Mammary epithelial cell (primary cell): ENCODE measurements at regions of chr6 and their contacts with region 1.

Region 1: DNA sequence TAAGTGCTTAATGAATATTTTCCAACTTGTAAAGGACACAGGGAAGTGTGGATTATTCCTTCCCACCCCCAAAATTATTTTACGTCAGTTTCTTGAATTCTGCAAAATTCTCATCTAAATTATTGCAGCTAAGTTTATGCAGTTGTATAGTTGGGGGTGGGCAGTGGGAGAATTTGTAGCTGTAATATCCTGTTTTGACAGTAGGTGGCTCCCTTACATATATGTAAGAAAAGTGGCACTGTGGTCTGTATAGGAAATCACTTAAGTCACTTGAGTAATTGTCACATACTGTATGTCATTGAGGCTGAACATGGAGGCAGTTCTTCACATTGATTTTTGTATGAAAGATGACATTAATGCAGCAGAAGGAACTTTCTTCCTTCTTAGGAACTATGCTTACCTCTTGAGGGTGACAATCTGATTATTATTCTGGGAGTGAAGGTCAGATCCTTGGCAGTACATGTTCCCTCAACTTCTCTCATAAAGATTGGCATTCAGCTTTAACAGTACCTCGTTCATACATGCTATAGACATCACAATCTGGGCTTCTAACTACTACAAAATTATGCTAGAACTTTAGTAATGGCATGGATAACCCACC is 14.7 kb upstream of the CFAP206 start:
- DNase-seq: peak; percentile 25
- H3K4me3 ChIP-seq: no peak overlapping the region
- H3K27ac ChIP-seq: no peak overlapping the region
- H3K4me1 ChIP-seq: no peaks in the 10 kb centered on the region
- H3K27me3 ChIP-seq: no peaks in the 10 kb centered on the region
- CTCF ChIP-seq: peak; percentile 66 to 69

Region 2: DNA sequence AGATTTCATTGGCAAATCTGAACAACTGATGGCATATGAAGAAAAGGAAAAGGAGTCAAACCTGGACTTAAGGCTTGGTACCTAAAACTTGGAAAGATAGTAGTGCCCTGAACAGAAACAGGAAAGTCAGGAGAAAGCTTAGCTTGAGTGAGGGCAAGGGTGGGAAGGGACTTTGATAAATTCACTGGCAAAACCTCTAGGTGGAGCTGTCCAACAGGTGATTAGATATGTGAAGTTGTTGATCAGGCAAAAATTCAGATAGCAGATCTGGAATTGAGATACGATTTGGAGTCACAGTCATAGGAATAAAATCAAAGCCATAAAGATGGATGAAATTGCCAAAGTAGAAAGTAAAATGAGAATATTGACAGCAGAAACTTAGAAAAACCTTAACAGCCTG is 253.9 kb before region 1 on chr6:
- CTCF ChIA-PET with region 1: no interaction called
- dilution Hi-C with region 1: no loop called
- in situ Hi-C with region 1: loop called (anchors 25 kb)
- intact Hi-C with region 1: loop called (anchors 1 kb)
- DNase-seq: peak; percentile 40
- H3K4me3 ChIP-seq: no peak overlapping the region
- H3K27ac ChIP-seq: no peak overlapping the region
- H3K4me1 ChIP-seq: no peaks in the 10 kb centered on the region
- H3K27me3 ChIP-seq: no peaks in the 10 kb centered on the region
- CTCF ChIP-seq: peak; percentile 70 to 76

Region 3: DNA sequence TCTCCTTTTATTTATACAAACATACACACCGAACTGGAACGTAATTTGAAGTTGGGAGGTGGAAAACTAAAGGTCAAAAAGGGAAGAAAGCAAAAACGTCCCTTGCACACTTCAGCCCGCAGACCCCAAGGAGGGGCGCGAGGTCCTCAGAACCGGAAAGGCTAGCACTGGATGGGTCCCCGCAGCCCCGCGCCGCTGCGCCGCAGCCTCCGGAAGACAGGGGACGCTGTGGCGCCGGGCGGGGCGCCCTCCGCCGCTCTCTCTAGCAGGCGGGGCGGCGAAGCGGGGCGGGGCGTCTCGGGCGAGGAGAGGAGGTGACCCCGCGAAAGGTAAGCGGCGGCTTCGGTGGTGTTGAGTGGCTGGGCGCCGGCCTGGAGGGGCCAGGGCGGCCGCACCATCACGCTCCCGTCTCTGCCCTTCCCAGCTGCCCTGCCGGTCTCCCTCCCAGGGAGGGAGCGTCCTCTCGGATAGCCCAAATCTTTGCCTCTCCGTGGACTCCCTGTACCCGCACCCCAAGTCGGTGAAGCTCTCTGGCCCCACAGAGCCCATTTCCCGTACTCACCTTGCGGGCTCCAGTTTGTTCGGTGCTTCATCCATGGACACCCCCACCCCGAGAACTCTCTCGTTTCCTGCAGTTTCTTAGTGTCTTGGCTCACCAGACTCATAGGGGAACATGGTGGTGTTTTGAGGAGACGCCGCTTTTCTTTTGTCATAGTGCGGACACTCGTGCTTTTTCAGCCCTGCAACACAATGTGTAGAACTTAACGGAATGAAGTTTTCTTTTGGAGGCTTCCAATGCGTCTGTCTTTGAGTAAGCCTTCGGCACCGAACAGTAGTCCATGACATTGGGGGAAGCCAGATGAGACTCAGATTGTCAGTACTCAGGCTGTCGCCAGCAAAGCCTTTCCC is 70.6 kb before region 1 on chr6 and contains the start of gene SMIM8:
- CTCF ChIA-PET with region 1: no interaction called
- dilution Hi-C with region 1: no loop called
- in situ Hi-C with region 1: no loop called
- intact Hi-C with region 1: loop called (anchors 2 kb)
- DNase-seq: peak; percentile 81
- H3K4me3 ChIP-seq: peak within 1 kb of the TSS; percentile 81 to 96 (median 91)
- H3K27ac ChIP-seq: peak within 1 kb of the TSS; percentile 67
- H3K4me1 ChIP-seq: no peaks in the 10 kb centered on the region
- H3K27me3 ChIP-seq: no peaks in the 10 kb centered on the region
- CTCF ChIP-seq: peak; percentile 85 to 98
- total RNA-seq, gene SMIM8: 6.9 to 8.7 TPM

Region 4: DNA sequence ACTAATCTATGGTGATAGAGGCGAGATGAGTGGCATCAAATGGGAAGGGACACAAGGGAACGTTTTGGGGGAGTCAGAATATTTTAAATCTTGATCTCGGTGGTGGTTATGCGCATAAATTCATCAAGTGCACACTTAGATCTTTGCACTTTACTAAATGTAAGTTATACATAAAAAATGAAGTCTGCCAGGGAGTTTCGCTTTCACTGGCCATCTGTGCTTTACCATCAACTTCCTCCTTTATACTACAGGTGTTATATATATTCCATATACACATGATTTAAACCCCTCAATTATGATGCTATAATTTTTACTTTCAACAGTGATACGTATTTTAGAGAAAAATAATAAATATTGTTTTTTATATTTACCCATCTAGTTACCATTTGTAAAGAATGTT is 406.5 kb after region 1 on chr6:
- CTCF ChIA-PET with region 1: no interaction called
- dilution Hi-C with region 1: no loop called
- in situ Hi-C with region 1: loop called in 1 of 2 experiments (anchors 25 kb)
- intact Hi-C with region 1: loop called (anchors 1 kb)
- DNase-seq: no peak
- H3K4me3 ChIP-seq: no peak overlapping the region
- H3K27ac ChIP-seq: no peak overlapping the region
- H3K4me1 ChIP-seq: peaks cover 18% of the 10 kb centered on the region
- H3K27me3 ChIP-seq: no peaks in the 10 kb centered on the region
- CTCF ChIP-seq: no peak

Region 5: GRCh38 chr6:87929843-87930288 is 536.7 kb after region 1 on chr6:
- CTCF ChIA-PET with region 1: no interaction called
- dilution Hi-C with region 1: no loop called
- in situ Hi-C with region 1: no loop called
- intact Hi-C with region 1: loop called (anchors 10 kb)
- DNase-seq: peak; percentile 67
- H3K4me3 ChIP-seq: no peak overlapping the region
- H3K27ac ChIP-seq: no peak overlapping the region
- H3K4me1 ChIP-seq: no peaks in the 10 kb centered on the region
- H3K27me3 ChIP-seq: peaks cover 3% of the 10 kb centered on the region
- CTCF ChIP-seq: peak; percentile 97 to 99

Region 6: GRCh38 chr6:88870717-88871330 is 1477.7 kb after region 1 on chr6:
- CTCF ChIA-PET with region 1: no interaction called
- dilution Hi-C with region 1: no loop called
- in situ Hi-C with region 1: no loop called
- intact Hi-C with region 1: loop called (anchors 5 kb)
- DNase-seq: peak; percentile 37
- H3K4me3 ChIP-seq: no peak overlapping the region
- H3K27ac ChIP-seq: no peak overlapping the region
- H3K4me1 ChIP-seq: peaks cover 8% of the 10 kb centered on the region
- H3K27me3 ChIP-seq: no peaks in the 10 kb centered on the region
- CTCF ChIP-seq: peak; percentile 49 to 59